ENCODE measurements at regions of chr2 and their contacts with region 1.

Region 1: DNA sequence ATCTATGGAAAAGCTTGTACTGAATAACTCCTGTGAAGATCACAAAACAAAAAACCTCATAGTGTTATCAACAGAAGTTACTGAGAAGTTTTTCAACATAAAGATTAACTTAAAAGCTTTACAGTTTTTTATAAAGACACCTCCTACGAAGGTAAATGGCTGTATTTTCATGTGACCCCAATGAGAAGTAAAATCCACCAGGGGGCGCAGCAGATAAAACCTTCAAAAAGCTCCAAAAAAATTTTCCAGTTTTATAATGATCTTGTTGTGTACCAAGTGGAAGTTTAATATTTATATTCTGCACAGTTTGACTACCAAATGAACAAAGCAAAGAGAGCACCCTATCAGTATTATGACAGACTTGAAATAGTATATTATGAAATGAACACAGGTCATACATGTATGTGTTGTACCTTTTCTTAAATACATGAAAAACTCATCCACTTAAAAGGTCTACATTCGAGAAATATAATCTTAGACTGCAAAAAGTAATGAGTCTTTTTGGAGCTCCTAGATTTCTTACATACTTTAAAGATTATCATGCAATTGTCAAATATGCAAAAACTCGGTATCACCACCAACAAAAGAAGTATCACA is 38.5 kb downstream of the PNO1 start:
- DNase-seq: peak in 4 of 5 donors; percentile 48 to 64 (median 57)
- H3K4me3 ChIP-seq: no peak overlapping the region
- H3K4me3 Mint-ChIP-seq: no peak overlapping the region
- H3K27ac ChIP-seq: no peak overlapping the region
- H3K27ac Mint-ChIP-seq: peak overlapping the region in 4 of 7 donors; percentile 38 to 91 (median 47)
- H3K4me1 ChIP-seq: peaks cover 47% of the 10 kb centered on the region
- H3K4me1 Mint-ChIP-seq: peaks cover 32 to 74% (median 51%) of the 10 kb centered on the region in 4 donors
- H3K27me3 ChIP-seq: no peaks in the 10 kb centered on the region
- H3K27me3 Mint-ChIP-seq: no peaks in the 10 kb centered on the region

Region 2: DNA sequence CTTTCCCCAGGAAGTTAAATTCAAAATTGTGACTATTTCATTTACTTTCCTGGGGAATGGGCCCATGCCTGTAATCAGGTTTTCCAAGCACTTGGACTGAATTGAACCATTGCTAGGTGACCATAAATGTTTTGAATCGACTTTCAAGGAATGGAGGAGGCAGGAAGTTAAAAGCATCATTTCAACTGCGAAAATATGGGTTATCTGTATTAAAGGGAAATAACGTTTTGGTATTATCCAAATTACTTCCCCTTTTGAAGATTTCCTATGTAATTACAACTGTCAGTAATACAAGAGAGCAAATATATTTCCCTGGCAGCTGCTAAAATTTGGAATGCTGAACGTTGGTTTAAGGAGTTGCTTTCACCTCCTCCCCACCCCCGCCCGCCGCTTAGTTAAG is 19.6 kb before region 1 on chr2:
- CTCF ChIA-PET with region 1: interaction called, 14 read pairs
- POLR2A ChIA-PET with region 1: interaction called, 4 read pairs
- intact Hi-C with region 1: no loop called
- DNase-seq: no peak
- H3K4me3 ChIP-seq: no peak overlapping the region
- H3K4me3 Mint-ChIP-seq: no peak overlapping the region
- H3K27ac ChIP-seq: no peak overlapping the region
- H3K27ac Mint-ChIP-seq: peak overlapping the region in 1 of 7 donors; percentile 24
- H3K4me1 ChIP-seq: no peaks in the 10 kb centered on the region
- H3K4me1 Mint-ChIP-seq: peaks cover 8 to 16% (median 13%) of the 10 kb centered on the region in 4 donors
- H3K27me3 ChIP-seq: no peaks in the 10 kb centered on the region
- H3K27me3 Mint-ChIP-seq: no peaks in the 10 kb centered on the region

Region 3: DNA sequence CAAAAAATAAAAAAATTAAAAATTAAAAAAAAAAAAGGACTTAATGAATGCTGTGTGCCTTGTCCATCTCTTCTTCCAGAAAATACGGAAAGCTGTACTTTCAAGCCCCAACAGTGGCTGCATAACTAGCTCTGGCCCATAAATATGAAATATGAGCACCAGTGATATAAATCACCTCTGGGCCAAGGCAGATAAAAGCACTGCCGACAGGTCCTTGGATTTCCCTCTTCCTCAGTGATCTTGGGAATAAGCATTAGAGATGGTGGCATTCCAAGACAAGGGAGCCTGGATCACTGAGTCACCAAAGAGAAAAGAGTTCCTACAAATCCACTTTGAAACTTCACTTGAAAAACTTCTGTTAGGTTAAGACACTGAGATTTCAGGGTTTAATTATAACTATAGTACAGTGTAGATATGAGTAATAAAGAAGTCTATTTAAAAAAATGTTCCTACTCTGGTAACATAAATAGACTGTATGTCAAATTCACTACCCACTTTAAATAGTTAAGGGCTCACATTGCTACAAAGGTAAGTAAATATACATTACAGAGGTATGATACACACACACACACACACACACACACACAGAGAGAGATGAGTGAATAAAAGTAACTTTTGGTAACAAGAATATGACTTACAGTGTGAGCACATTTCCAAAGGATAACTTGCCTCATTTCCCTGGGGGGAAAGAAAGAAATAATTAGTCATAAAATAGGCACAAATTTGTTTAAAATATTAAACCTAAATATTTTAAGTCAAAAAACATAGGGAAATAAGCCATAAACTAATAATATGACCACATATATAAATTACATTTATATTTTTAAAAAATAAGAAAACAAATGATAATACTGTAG is 20.5 kb after region 1 on chr2:
- CTCF ChIA-PET with region 1: interaction called, 20 read pairs
- POLR2A ChIA-PET with region 1: no interaction called
- intact Hi-C with region 1: no loop called
- DNase-seq: no peak
- H3K4me3 ChIP-seq: no peak overlapping the region
- H3K4me3 Mint-ChIP-seq: peak overlapping the region in 1 of 8 donors; percentile 73
- H3K27ac ChIP-seq: no peak overlapping the region
- H3K27ac Mint-ChIP-seq: peak overlapping the region in 5 of 7 donors; percentile 9 to 77 (median 28)
- H3K4me1 ChIP-seq: peaks cover 77% of the 10 kb centered on the region
- H3K4me1 Mint-ChIP-seq: peaks cover 51 to 90% (median 71%) of the 10 kb centered on the region in 4 donors
- H3K27me3 ChIP-seq: no peaks in the 10 kb centered on the region
- H3K27me3 Mint-ChIP-seq: no peaks in the 10 kb centered on the region

Region 4: GRCh38 chr2:68244456-68244855 is 48.2 kb after region 1 on chr2:
- CTCF ChIA-PET with region 1: interaction called, 38 read pairs
- POLR2A ChIA-PET with region 1: no interaction called
- intact Hi-C with region 1: no loop called
- DNase-seq: no peak
- H3K4me3 ChIP-seq: no peak overlapping the region
- H3K4me3 Mint-ChIP-seq: no peak overlapping the region
- H3K27ac ChIP-seq: no peak overlapping the region
- H3K27ac Mint-ChIP-seq: no peak overlapping the region
- H3K4me1 ChIP-seq: peaks cover 95% of the 10 kb centered on the region
- H3K4me1 Mint-ChIP-seq: peaks cover 17 to 39% (median 26%) of the 10 kb centered on the region in 4 donors
- H3K27me3 ChIP-seq: no peaks in the 10 kb centered on the region
- H3K27me3 Mint-ChIP-seq: no peaks in the 10 kb centered on the region

Region 5: GRCh38 chr2:68282811-68283418 is 86.7 kb after region 1 on chr2:
- CTCF ChIA-PET with region 1: interaction called, 124 read pairs
- POLR2A ChIA-PET with region 1: interaction called, 9 read pairs
- intact Hi-C with region 1: loop called (anchors 1 kb)
- DNase-seq: peak; percentile 38 to 51 (median 46)
- H3K4me3 ChIP-seq: no peak overlapping the region
- H3K4me3 Mint-ChIP-seq: no peak overlapping the region
- H3K27ac ChIP-seq: no peak overlapping the region
- H3K27ac Mint-ChIP-seq: no peak overlapping the region
- H3K4me1 ChIP-seq: peaks cover 5% of the 10 kb centered on the region
- H3K4me1 Mint-ChIP-seq: peaks cover 0 to 8% (median 0%) of the 10 kb centered on the region in 4 donors
- H3K27me3 ChIP-seq: peaks cover 7% of the 10 kb centered on the region
- H3K27me3 Mint-ChIP-seq: peaks cover 4 to 12% of the 10 kb centered on the region in 2 donors